ENCODE measurements at regions of chrX and their contacts with region 1.

Region 1: GRCh38 chrX:56978172-56978571 is 17.2 kb downstream of the SPIN3 start:
- DNase-seq: no peak
- H3K4me3 ChIP-seq: no peak overlapping the region
- CTCF ChIP-seq: peak; percentile 50

Region 2: DNA sequence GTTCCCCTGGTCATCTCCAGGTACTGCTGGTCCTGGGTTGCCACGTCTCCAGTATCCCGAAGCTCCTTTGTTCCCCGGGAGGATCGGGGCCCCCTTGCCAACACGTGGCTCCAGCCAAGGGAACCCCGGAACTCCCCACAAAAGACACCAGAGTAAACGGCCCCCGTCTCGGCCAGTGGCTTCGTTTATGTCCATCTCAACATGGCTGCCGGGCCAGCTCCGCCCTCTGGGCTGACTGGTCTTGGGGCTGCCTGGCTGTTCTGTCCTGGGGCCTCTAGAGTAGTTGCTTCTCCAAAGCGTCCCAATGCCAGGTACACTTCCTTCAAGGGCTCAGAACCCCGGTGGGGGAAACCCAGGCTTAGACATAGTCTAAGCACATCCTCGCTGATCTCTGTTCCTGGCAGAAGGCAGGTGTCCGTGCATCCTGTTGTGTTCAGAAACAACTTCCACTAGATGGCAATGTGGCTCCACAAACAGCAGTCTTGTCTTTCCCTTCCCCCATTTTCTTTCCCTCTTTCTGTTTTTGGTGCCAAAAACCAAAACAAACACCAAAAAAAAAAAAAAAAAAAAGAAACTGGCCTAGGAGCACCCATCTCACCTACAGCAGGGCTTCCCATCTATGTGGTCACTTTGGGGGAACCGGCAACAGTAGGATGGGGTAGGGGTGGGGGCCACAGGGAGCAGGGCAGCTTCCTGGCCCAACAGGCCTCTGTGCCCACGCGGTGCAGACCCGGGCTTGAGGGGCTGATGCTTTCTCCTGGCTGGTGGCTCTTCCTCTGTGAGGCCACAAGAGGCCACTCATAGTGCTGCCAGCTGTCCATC is 213.8 kb before region 1 on chrX:
- CTCF ChIA-PET with region 1: interaction called, 16 read pairs
- POLR2A ChIA-PET with region 1: no interaction called
- DNase-seq: no peak
- H3K4me3 ChIP-seq: no peak overlapping the region
- CTCF ChIP-seq: peak; percentile 56

Region 3: DNA sequence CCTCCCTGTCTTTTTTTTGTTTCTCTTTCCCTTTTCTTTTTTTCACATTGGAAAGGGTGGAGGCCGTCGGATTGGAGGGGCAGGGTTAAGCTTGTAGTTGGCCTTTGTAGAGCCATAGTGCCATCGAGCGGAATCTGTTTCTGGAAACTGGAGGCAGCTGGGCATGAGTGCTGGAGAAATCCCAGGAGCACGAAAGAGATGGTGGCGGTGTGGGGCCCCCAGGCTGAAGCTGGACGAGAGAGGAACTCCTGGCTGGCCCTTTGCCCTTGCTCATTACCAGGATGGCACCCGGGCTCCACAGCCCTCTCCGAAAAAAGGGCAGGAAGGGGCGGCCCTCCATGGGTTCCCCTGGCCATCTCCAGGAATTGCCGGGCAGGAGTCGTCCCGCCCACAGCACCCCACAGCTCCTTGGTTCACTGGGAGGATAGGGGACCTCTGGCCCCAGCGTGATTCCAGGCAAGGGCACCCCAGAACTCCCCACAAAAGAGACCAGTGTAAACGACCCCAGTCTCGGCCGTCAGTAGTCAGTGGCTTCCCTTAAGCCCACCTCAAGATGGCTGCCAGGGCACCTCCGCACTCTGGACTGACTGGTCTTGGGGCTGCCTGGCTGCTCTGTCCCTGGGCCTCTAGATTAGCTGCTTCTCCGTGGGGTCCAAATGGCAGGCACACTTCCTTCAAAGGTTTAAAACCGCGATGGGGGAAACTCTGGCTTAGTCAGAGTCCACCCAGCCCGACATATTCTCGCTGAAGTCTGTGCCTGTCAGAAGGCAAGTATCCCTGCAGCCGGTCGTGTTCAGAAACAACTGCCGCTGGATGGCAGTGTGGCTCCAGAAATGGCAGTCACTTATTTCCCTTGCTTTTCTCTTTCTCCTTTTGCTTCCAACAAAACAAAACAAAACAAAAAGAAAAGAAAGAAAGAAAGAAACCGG is 175.0 kb before region 1 on chrX:
- CTCF ChIA-PET with region 1: interaction called, 14 read pairs
- POLR2A ChIA-PET with region 1: no interaction called
- DNase-seq: no peak
- H3K4me3 ChIP-seq: no peak overlapping the region
- CTCF ChIP-seq: peak; percentile 35

Region 4: DNA sequence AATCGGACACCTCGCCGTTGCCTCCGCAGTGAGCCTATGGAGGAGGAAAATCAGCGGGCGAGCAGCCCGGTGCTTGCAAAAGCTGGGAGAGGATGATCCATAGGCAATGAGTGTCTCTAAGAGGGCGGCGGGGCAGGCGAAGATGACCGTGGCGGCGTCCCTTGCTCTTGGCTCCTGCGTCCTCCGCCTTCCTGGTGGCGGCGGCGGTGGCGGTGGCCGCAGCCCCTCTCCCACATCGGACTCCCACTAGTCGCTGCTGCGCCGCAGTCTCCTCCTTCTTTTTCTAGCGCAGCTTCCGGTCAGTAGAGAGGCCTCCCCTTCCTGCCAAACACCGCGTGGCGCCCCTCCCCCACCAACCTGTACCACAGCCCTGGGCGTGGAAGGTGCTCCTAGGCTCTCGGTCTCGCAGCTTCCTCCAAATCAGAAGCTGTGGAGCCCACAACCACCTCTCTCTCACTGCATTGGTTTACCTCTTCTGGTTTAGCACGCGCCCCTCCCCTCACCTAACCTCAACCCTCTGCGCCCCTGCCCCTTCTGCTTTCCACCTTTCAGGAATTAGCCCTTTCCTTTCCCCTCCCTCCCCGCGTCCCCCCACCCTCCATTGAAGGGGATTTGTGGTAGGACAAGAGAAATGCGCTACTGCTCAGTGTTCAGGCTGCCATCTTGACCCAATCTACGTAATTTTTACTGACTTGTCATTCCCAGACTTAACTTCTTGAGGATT is 17.3 kb after region 1 on chrX and contains the start of gene SPIN3:
- CTCF ChIA-PET with region 1: interaction called, 16 read pairs
- POLR2A ChIA-PET with region 1: no interaction called
- DNase-seq: no peak
- H3K4me3 ChIP-seq: peak within 1 kb of the TSS; percentile 70
- CTCF ChIP-seq: no peak

Measured in AG04449 (cell line).